ENCODE measurements at regions of chr9 and their contacts with region 1.

Region 1: DNA sequence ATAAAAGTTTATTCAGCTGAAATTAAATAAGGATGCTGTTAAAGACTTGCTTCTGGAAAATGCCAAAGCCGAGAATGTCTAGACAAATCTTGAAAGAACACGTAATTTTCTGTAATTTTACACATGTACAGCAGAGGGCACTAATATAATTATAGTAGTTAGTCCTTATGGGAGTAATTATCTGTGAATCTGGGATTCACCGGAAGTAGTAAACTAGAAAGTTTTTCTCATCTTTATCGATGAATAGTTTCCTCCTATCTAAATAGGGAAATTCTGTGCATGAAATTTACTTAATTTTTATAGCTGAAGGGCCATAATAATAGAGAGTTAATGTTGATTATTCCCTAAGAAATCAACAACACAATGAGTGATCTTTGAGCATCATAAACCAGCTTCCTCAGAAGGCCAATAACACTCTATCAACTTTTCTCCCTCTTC is 18.4 kb upstream of the CNTLN start:
- DNase-seq: no peak
- ATAC-seq: peak; percentile 43
- H3K4me3 ChIP-seq: no peak overlapping the region
- H3K27ac ChIP-seq: no peak overlapping the region
- H3K4me1 ChIP-seq: no peaks in the 10 kb centered on the region
- H3K27me3 ChIP-seq: no peaks in the 10 kb centered on the region
- CTCF ChIP-seq: peak; percentile 66

Region 2: GRCh38 chr9:17160327-17160726 is 43.9 kb after region 1 on chr9:
- intact Hi-C with region 1: no loop called
- DNase-seq: no peak
- ATAC-seq: no peak
- H3K4me3 ChIP-seq: no peak overlapping the region
- H3K27ac ChIP-seq: no peak overlapping the region
- H3K4me1 ChIP-seq: no peaks in the 10 kb centered on the region
- H3K27me3 ChIP-seq: no peaks in the 10 kb centered on the region
- CTCF ChIP-seq: no peak

Region 3: GRCh38 chr9:17185481-17186029 is 69.1 kb after region 1 on chr9:
- intact Hi-C with region 1: no loop called
- DNase-seq: no peak
- ATAC-seq: no peak
- H3K4me3 ChIP-seq: no peak overlapping the region
- H3K27ac ChIP-seq: no peak overlapping the region
- H3K4me1 ChIP-seq: no peaks in the 10 kb centered on the region
- H3K27me3 ChIP-seq: no peaks in the 10 kb centered on the region
- CTCF ChIP-seq: no peak

Region 4: DNA sequence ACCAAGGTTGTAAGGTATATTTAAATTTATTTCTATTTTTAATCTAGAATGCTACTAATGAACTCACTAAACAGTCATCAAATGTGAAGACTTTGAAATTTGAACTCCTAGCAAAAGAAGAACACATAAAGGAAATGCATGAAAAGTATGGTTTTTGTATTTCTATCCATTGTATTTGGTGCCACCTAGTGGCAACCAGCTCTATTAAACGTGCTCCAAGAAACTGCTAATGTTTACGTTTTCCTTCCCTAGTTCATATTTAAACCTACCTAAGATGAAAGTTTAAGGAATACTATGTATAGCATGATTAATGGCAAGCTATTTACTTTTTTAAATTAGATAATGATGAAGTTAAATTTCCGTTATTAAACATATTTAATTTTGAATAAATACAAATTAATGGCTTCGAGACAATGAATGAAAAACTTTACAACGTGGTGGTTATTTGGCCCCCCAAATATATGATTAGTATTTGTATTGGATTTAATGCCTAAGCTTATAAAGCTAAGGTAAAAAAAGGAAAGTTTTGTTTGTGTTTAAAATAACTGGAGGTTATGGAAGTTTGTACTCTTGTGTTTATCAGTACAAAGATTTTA is 346.5 kb after region 1 on chr9:
- intact Hi-C with region 1: loop called (anchors 10 kb)
- DNase-seq: no peak
- ATAC-seq: peak; percentile 64
- H3K4me3 ChIP-seq: no peak overlapping the region
- H3K27ac ChIP-seq: no peak overlapping the region
- H3K4me1 ChIP-seq: no peaks in the 10 kb centered on the region
- H3K27me3 ChIP-seq: no peaks in the 10 kb centered on the region
- CTCF ChIP-seq: peak; percentile 82

Measured in upper lobe of right lung (tissue), 1 donor.